Endothelial cell of umbilical vein (primary cell): ENCODE measurements at regions of chr4 and their contacts with region 1.

Region 1: GRCh38 chr4:127622921-127623656 is 9.7 kb upstream of the INTU start:
- DNase-seq: peak; percentile 57
- H3K4me3 ChIP-seq: peak overlapping the region; percentile 48 to 89 (median 78)
- H3K27ac ChIP-seq: no peak overlapping the region
- H3K4me1 ChIP-seq: peaks cover 15% of the 10 kb centered on the region
- H3K27me3 ChIP-seq: peaks cover 0 to 19% of the 10 kb centered on the region in 2 experiments
- CTCF ChIP-seq: peak; percentile 24 to 51
- POLR2A ChIP-seq: no peak

Region 2: DNA sequence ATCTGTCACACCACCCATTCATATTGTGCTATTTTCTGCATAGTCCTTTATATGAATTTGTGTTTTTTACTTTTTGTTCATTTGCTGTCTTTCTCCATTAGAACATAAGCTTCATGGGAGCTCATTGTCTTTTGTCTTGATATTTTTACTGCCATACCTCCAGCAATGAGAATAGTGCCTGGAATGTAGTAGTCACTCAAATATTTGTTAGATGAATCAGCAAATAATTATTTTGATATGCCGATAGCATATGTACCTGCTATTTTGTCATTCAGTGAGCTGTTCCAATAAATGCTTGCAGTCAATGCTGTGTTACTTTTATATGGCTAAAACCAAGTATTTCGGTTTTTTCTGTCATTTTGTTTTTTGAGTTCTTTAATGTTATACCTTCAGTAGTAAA is 63.6 kb after region 1 on chr4:
- CTCF ChIA-PET with region 1: interaction called, 12 read pairs
- POLR2A ChIA-PET with region 1: no interaction called
- dilution Hi-C with region 1: no loop called
- intact Hi-C with region 1: no loop called
- DNase-seq: peak; percentile 42
- H3K4me3 ChIP-seq: no peak overlapping the region
- H3K27ac ChIP-seq: peak overlapping the region; percentile 57
- H3K4me1 ChIP-seq: peaks cover 18% of the 10 kb centered on the region
- H3K27me3 ChIP-seq: no peaks in the 10 kb centered on the region
- CTCF ChIP-seq: no peak
- POLR2A ChIP-seq: no peak

Region 3: DNA sequence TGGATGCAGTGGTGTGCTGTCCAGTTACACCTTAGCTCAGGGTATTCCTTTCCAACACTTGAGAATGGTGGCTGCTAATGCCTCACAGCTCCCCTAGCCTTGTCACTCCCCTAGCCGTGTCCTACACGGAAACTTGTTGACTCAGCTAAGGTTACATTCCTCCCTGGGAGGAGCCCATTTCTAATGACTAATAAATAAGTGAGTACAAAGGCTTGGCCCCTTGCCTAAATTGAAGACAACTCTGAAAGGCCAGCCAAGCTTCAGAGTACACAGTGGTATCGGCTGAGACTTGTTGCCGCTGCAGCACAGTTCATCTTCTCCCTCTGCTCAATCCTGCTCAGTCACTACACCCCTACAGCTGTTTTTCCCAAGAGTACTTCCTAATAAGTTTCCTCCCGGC is 85.9 kb after region 1 on chr4:
- CTCF ChIA-PET with region 1: no interaction called
- POLR2A ChIA-PET with region 1: no interaction called
- dilution Hi-C with region 1: no loop called
- intact Hi-C with region 1: loop called (anchors 1 kb)
- DNase-seq: peak; percentile 86
- H3K4me3 ChIP-seq: peak overlapping the region in 1 of 3 experiments; percentile 12
- H3K27ac ChIP-seq: peak overlapping the region; percentile 36
- H3K4me1 ChIP-seq: peaks cover 7% of the 10 kb centered on the region
- H3K27me3 ChIP-seq: no peaks in the 10 kb centered on the region
- CTCF ChIP-seq: no peak
- POLR2A ChIP-seq: no peak